Activated naive CD4-positive, alpha-beta T cell treated with anti-CD3 and anti-CD28 coated beads, Interleukin-2, amount 10 ng/mL, durations not matched to agents 7 days and 5 days (primary cell): ENCODE measurements at regions of chr12 and their contacts with region 1.

Region 1: GRCh38 chr12:56593909-56594621 is 36.1 kb downstream of the BAZ2A start:
- DNase-seq: peak; percentile 72
- H3K4me3 Mint-ChIP-seq: no peak overlapping the region
- H3K27ac Mint-ChIP-seq: no peak overlapping the region
- H3K4me1 Mint-ChIP-seq: peaks cover 4% of the 10 kb centered on the region
- H3K27me3 Mint-ChIP-seq: peaks cover 6% of the 10 kb centered on the region

Region 2: GRCh38 chr12:56521590-56522371 is 72.3 kb before region 1 on chr12 and contains the start of gene RBMS2:
- CTCF ChIA-PET with region 1: interaction called, 10 read pairs
- DNase-seq: peak; percentile 53
- H3K4me3 Mint-ChIP-seq: peak within 1 kb of the TSS; percentile 76
- H3K27ac Mint-ChIP-seq: no peak within 1 kb of the TSS
- H3K4me1 Mint-ChIP-seq: peaks cover 33% of the 10 kb centered on the region
- H3K27me3 Mint-ChIP-seq: peaks cover 12% of the 10 kb centered on the region

Region 3: DNA sequence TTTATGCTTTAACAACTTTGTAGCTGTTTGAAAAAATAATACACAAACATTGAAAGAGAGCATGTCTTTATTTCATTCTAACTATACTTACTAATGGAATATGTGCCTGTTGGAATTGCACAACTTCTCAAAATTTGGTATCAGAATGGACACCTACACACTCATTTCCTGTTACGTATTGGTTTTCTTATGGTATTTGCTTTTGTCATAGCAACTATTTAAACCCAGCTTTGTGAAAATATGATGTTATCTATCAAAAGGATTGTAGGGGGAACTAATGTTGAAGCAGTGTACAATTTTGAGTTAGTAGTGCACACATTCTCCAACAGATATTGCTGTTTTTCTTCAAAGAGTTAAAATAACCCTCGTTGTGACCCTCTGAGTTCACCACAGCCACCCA is 19.9 kb before region 1 on chr12:
- CTCF ChIA-PET with region 1: interaction called, 20 read pairs
- DNase-seq: no peak
- H3K4me3 Mint-ChIP-seq: no peak overlapping the region
- H3K27ac Mint-ChIP-seq: no peak overlapping the region
- H3K4me1 Mint-ChIP-seq: peaks cover 19% of the 10 kb centered on the region
- H3K27me3 Mint-ChIP-seq: peaks cover 3% of the 10 kb centered on the region

Region 4: GRCh38 chr12:56581418-56582145 is 12.5 kb before region 1 on chr12:
- CTCF ChIA-PET with region 1: interaction called, 20 read pairs
- DNase-seq: peak; percentile 28
- H3K4me3 Mint-ChIP-seq: no peak overlapping the region
- H3K27ac Mint-ChIP-seq: peak overlapping the region; percentile 81
- H3K4me1 Mint-ChIP-seq: peaks cover 27% of the 10 kb centered on the region
- H3K27me3 Mint-ChIP-seq: no peaks in the 10 kb centered on the region

Region 5: DNA sequence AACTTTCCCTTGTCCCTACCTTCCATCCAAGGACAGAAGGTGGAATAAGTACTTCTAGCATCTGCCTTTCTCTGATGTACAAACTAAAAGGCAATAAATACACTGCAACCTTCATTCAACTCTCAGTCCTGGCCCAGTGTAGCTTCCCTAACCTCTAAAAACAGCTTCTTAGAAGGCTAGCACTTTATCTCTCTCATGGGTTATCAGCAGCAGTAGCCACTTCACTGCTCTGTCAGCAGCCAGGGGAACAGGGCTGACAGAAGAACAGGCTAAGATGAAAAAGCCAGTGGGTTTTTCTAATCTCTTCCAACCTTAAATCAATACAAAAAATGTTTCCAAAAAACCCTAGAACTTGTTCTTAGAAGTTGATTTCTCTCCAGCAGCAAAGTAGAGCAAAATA is 22.9 kb after region 1 on chr12:
- CTCF ChIA-PET with region 1: no interaction called
- DNase-seq: no peak
- H3K4me3 Mint-ChIP-seq: no peak overlapping the region
- H3K27ac Mint-ChIP-seq: no peak overlapping the region
- H3K4me1 Mint-ChIP-seq: peaks cover 2% of the 10 kb centered on the region
- H3K27me3 Mint-ChIP-seq: no peaks in the 10 kb centered on the region